ENCODE measurements at regions of chr22 and their contacts with region 1.

Region 1: DNA sequence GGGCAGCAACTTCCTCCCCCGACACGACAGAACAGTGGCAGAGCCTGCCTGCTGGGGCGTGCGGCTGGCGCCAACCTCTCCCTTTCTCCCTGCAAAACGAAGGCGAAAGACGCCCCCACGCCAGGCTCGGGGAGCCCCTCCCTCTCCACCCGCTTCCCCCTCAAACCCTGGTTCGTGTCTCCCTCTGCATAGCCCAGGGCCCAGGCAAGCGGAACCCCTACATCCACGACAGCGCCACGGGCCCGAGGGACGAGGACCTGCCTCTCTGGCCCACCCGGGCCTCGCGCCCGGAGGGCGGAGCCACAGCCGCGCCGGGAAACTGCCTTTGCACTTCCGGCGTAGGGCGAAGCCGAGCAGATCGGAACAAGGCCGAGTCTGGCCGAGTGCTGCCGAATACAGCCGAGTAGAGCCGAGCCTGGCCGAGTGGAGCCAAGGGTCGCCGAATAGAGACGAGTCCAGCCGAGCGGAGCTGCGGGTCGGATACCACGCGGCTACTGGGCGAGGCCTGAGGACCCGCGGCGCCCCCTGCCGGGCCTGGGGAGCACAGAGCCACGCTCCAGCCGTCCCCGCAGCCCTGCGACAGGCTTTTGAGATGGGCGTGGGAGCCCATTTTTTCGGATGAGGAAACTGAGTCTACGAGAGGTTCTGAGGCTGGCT is 11.2 kb upstream of the C1QTNF6 start:
- DNase-seq: peak; percentile 95 to 100
- H3K4me3 ChIP-seq: peak overlapping the region; percentile 77
- H3K27ac ChIP-seq: peak overlapping the region; percentile 94
- H3K4me1 ChIP-seq: peaks cover 46% of the 10 kb centered on the region
- H3K27me3 ChIP-seq: no peaks in the 10 kb centered on the region
- CTCF ChIP-seq: peak; percentile 91

Region 2: DNA sequence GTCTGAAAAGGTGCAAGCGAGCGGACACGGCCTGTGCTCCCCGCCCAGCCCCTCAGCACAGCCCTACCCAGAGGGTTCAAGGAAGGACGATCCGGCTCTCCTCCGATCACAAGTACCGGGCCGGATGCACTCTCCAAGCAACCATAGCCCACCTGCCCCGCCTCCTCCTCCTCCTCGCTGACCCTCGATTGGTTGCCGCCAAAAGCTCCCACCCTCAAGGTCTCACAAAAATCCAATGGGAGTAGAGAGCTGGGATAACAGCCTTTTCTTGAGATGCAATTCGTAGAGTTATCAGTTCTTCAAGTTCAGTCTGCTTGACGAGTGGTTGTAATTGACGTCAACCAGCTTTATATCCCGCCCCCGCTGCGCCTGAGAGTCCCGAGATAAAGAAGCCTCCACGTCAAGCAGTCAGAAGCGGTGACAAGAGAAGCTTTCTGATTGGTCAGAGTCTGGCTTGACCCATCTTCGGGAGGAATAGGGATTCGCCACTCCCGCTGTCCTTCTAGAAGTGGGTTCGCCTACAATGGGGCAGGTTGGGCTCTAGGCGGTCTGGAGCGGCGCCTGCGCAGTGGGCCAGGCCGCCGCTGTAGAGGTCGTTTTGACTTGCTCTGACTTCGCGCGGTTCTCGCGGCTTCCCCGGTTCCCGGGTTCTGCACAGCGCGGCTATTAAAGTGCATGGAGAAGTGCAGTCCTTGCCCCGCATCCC is 423.1 kb before region 1 on chr22 and contains the start of gene IFT27:
- CTCF ChIA-PET with region 1: no interaction called
- POLR2A ChIA-PET with region 1: interaction called, 6 read pairs
- intact Hi-C with region 1: loop called (anchors 1 kb)
- DNase-seq: peak; percentile 99 to 100
- H3K4me3 ChIP-seq: peak within 1 kb of the TSS; percentile 76
- H3K27ac ChIP-seq: no peak within 1 kb of the TSS
- H3K4me1 ChIP-seq: peaks cover 13% of the 10 kb centered on the region
- H3K27me3 ChIP-seq: no peaks in the 10 kb centered on the region
- CTCF ChIP-seq: no peak
- total RNA-seq, gene IFT27: 74.2 and 84.2 TPM in 2 replicates

Region 3: GRCh38 chr22:37019309-37020125 is 179.7 kb before region 1 on chr22 and contains the starts of genes MPST and TST:
- CTCF ChIA-PET with region 1: no interaction called
- POLR2A ChIA-PET with region 1: interaction called, 17 read pairs
- intact Hi-C with region 1: no loop called
- DNase-seq: peak; percentile 62 to 80
- H3K4me3 ChIP-seq: peak within 1 kb of the TSS; percentile 62
- H3K27ac ChIP-seq: peak within 1 kb of the TSS; percentile 17
- H3K4me1 ChIP-seq: peaks cover 42% of the 10 kb centered on the region
- H3K27me3 ChIP-seq: no peaks in the 10 kb centered on the region
- CTCF ChIP-seq: 0 out of 2 replicates have a peak, but pooled peaks have one; percentile 37
- total RNA-seq, gene MPST: 75.9 and 109 TPM in 2 replicates
- total RNA-seq, gene TST: 99.4 and 123 TPM in 2 replicates

Region 4: DNA sequence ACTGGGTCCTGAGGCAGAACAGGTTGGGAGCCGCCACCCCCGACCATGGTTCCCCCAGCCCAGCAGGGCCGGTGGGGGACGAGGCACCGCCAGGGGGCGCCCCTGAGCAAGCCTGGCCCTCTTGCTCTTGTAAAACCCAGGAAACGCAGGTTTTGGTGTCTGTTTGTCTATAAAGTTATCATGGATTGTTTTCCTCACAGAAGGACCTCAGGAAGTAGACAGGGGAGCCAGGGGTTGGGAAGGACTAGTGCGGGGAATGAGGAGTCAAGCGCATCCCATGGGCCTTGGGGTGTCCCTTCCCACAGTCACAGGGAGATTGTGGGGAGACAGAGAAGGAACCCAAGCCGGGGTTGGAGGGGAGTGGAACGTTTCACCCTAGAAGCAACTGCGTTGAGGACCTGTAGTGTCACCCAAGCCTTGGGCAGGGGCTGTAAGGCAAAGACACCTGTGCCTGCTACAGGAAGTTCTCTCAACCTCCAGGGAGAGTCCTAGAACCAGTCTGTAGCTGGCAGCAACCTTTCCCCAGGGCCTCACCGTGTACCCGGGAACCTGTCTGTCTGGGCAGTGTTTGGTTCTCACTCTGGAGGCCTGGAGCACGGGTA is 121.2 kb before region 1 on chr22:
- CTCF ChIA-PET with region 1: interaction called, 7 read pairs
- POLR2A ChIA-PET with region 1: interaction called, 5 read pairs
- intact Hi-C with region 1: loop called (anchors 1 kb)
- DNase-seq: peak in 1 of 2 experiments; percentile 74
- H3K4me3 ChIP-seq: no peak overlapping the region
- H3K27ac ChIP-seq: no peak overlapping the region
- H3K4me1 ChIP-seq: no peaks in the 10 kb centered on the region
- H3K27me3 ChIP-seq: peaks cover 43% of the 10 kb centered on the region
- CTCF ChIP-seq: peak; percentile 100

Region 5: GRCh38 chr22:37166675-37167066 is 32.6 kb before region 1 on chr22:
- CTCF ChIA-PET with region 1: interaction called, 4 read pairs
- POLR2A ChIA-PET with region 1: interaction called, 9 read pairs
- intact Hi-C with region 1: loop called (anchors 1 kb)
- DNase-seq: peak; percentile 73 to 86
- H3K4me3 ChIP-seq: peak overlapping the region; percentile 12; the same call in 1 of the 2 replicates
- H3K27ac ChIP-seq: no peak overlapping the region
- H3K4me1 ChIP-seq: peaks cover 9% of the 10 kb centered on the region; the same call in 1 of the 2 replicates
- H3K27me3 ChIP-seq: no peaks in the 10 kb centered on the region
- CTCF ChIP-seq: peak; percentile 96

Region 6: DNA sequence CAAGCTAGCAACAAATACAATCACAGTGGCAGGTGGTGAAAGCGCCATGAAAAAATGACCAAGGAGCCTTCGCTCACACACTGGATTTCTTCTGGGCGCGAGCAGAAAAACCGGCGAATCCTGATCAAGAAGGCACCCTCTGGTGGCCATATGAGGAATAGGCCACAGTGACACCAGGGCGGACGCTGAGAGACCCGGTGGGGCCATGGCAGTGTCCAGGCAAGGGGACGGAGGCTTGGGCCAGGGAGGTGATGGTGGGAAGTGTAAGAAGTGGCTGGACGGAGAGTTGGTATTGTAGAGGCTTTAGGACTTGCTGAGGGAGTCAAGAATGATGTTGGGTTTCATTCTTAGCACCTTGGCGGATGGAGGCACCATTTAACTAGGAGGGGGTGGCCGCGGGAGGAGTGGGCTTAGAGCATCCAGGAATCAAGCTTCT is 61.7 kb after region 1 on chr22:
- CTCF ChIA-PET with region 1: interaction called, 4 read pairs
- POLR2A ChIA-PET with region 1: no interaction called
- intact Hi-C with region 1: loop called (anchors 1 kb)
- DNase-seq: peak in 1 of 2 experiments; percentile 67
- H3K4me3 ChIP-seq: no peak overlapping the region
- H3K27ac ChIP-seq: no peak overlapping the region
- H3K4me1 ChIP-seq: peaks cover 19% of the 10 kb centered on the region; the same call in 1 of the 2 replicates
- H3K27me3 ChIP-seq: no peaks in the 10 kb centered on the region
- CTCF ChIP-seq: peak; percentile 98